ENCODE measurements at regions of chrX and their contacts with region 1.

Region 1: DNA sequence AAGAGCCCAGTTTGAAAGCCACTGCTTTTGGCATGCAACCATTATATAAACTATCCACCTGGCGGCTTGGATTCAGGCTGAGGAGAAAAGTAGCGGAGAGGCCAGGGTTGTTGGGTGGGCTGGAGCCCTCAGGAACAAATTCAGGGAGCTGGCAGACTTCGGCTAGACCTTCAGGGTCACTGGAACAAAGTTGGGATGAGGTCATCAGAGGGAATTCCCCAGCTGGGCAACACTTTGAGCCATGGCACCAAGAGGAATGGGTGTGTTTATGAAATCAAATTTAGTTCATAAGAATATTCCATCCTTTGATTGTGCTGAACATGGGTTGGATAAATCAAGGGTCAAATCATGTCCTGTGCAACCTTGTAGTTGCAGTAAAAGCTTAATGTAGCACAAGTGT is 22.0 kb downstream of the MTMR1 start:
- DNase-seq: no peak
- ATAC-seq: no peak
- H3K4me3 ChIP-seq: no peak overlapping the region
- H3K4me3 Mint-ChIP-seq: no peak overlapping the region
- H3K27ac ChIP-seq: no peak overlapping the region
- H3K27ac Mint-ChIP-seq: peak overlapping the region; percentile 56 to 60
- H3K4me1 ChIP-seq: peaks cover 0 to 2% of the 10 kb centered on the region in 2 experiments
- H3K4me1 Mint-ChIP-seq: peaks cover 30 to 49% (median 44%) of the 10 kb centered on the region in 3 donors
- H3K27me3 ChIP-seq: no peaks in the 10 kb centered on the region
- H3K27me3 Mint-ChIP-seq: peaks cover 0 to 3% of the 10 kb centered on the region in 2 donors

Region 2: GRCh38 chrX:150558424-150558823 is 156.8 kb before region 1 on chrX:
- CTCF ChIA-PET with region 1: no interaction called
- POLR2A ChIA-PET with region 1: no interaction called
- DNase-seq: no peak
- ATAC-seq: no peak
- H3K4me3 ChIP-seq: no peak overlapping the region
- H3K4me3 Mint-ChIP-seq: no peak overlapping the region
- H3K27ac ChIP-seq: no peak overlapping the region
- H3K27ac Mint-ChIP-seq: no peak overlapping the region
- H3K4me1 ChIP-seq: no peaks in the 10 kb centered on the region
- H3K4me1 Mint-ChIP-seq: no peaks in the 10 kb centered on the region
- H3K27me3 ChIP-seq: no peaks in the 10 kb centered on the region
- H3K27me3 Mint-ChIP-seq: peaks cover 0 to 13% of the 10 kb centered on the region in 2 donors

Region 3: DNA sequence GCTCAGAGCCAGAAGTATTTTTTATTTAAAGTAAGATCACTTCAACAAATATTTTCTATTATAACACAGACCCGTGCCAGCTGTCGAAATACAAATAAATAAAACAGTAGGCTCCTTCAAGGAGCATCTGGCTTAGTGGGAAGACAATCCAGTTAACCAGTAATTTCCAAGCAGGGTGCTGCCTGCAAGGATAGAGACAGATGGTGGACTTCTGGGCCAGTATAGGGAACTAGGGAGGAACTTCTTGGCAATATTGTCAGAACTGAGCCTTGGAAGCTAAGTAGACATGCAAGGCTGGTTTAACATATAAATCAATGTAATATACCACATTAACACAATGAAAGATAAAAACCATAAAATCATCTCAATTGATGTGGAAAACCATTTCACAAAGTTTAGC is 39.0 kb before region 1 on chrX:
- CTCF ChIA-PET with region 1: interaction called, 5 to 11 read pairs
- POLR2A ChIA-PET with region 1: no interaction called
- DNase-seq: no peak
- ATAC-seq: no peak
- H3K4me3 ChIP-seq: no peak overlapping the region
- H3K4me3 Mint-ChIP-seq: no peak overlapping the region
- H3K27ac ChIP-seq: no peak overlapping the region
- H3K27ac Mint-ChIP-seq: no peak overlapping the region
- H3K4me1 ChIP-seq: no peaks in the 10 kb centered on the region
- H3K4me1 Mint-ChIP-seq: no peaks in the 10 kb centered on the region
- H3K27me3 ChIP-seq: no peaks in the 10 kb centered on the region
- H3K27me3 Mint-ChIP-seq: peaks cover 0 to 11% of the 10 kb centered on the region in 2 donors

Region 4: DNA sequence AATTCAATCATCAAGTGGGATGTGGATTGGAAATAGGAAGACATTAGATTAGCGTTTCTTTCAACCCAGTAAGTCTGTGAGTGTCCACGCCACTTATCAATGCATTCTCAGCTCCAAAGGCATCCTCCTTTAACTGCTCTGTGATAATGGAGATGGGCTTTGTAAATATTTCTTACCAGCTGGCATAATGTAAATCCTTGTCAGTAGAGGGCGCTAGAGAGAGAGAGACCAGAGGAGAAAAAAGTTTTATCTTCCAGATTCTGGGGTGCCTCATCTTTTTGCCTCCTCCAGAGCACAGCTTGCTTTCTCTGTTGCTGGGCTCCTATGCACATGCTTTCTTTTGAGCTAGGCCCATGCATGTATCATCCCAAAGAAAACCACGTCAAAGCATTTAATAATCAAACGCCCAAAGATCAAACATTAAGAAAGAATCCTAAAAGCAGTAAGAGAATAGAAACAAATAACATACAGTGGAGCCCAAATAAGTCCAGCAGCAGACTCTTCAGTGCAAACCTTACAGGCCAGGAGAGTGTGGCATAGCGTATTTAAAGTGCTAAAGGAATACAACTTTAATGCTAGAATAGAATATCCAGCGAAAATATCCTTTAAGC is 31.5 kb before region 1 on chrX:
- CTCF ChIA-PET with region 1: interaction called, 20 to 23 read pairs
- POLR2A ChIA-PET with region 1: interaction called in 1 of 2 experiments, 4 read pairs
- DNase-seq: peak in 6 of 35 experiments; percentile 7 to 77 (median 28)
- ATAC-seq: peak; percentile 36 to 63 (median 53)
- H3K4me3 ChIP-seq: no peak overlapping the region
- H3K4me3 Mint-ChIP-seq: no peak overlapping the region
- H3K27ac ChIP-seq: no peak overlapping the region
- H3K27ac Mint-ChIP-seq: no peak overlapping the region
- H3K4me1 ChIP-seq: peaks cover 0 to 6% of the 10 kb centered on the region in 2 experiments
- H3K4me1 Mint-ChIP-seq: peaks cover 9 to 13% (median 12%) of the 10 kb centered on the region in 3 donors
- H3K27me3 ChIP-seq: no peaks in the 10 kb centered on the region
- H3K27me3 Mint-ChIP-seq: peaks cover 0 to 6% of the 10 kb centered on the region in 2 donors

Region 5: DNA sequence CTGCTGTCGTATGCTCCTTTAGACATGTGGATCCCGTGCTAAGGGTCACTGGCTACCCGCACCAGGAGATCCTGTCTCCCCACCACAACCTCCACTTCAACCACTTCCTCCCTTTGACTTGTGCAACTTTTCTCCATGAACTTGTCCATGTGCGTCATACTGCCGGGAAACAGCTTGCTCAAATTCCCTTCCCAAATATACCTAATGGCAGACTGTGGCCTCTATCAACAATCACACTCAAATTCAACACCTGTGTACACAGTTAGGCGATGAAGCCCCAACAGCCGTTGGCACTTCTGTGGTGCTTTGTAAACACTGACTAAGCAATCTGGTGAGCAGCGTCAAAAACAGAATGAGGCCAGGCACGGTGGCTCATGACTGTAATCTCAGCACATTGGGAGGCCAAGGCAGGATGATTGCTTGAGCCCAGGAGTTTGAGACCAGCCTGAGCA is 133.8 kb after region 1 on chrX:
- CTCF ChIA-PET with region 1: no interaction called
- POLR2A ChIA-PET with region 1: no interaction called
- DNase-seq: no peak
- ATAC-seq: no peak
- H3K4me3 ChIP-seq: no peak overlapping the region
- H3K4me3 Mint-ChIP-seq: no peak overlapping the region
- H3K27ac ChIP-seq: no peak overlapping the region
- H3K27ac Mint-ChIP-seq: no peak overlapping the region
- H3K4me1 ChIP-seq: no peaks in the 10 kb centered on the region
- H3K4me1 Mint-ChIP-seq: peaks cover 4 to 14% (median 8%) of the 10 kb centered on the region in 3 donors
- H3K27me3 ChIP-seq: no peaks in the 10 kb centered on the region
- H3K27me3 Mint-ChIP-seq: peaks cover 0 to 4% of the 10 kb centered on the region in 2 donors